ENCODE measurements at regions of chr17 and their contacts with region 1.

Region 1: DNA sequence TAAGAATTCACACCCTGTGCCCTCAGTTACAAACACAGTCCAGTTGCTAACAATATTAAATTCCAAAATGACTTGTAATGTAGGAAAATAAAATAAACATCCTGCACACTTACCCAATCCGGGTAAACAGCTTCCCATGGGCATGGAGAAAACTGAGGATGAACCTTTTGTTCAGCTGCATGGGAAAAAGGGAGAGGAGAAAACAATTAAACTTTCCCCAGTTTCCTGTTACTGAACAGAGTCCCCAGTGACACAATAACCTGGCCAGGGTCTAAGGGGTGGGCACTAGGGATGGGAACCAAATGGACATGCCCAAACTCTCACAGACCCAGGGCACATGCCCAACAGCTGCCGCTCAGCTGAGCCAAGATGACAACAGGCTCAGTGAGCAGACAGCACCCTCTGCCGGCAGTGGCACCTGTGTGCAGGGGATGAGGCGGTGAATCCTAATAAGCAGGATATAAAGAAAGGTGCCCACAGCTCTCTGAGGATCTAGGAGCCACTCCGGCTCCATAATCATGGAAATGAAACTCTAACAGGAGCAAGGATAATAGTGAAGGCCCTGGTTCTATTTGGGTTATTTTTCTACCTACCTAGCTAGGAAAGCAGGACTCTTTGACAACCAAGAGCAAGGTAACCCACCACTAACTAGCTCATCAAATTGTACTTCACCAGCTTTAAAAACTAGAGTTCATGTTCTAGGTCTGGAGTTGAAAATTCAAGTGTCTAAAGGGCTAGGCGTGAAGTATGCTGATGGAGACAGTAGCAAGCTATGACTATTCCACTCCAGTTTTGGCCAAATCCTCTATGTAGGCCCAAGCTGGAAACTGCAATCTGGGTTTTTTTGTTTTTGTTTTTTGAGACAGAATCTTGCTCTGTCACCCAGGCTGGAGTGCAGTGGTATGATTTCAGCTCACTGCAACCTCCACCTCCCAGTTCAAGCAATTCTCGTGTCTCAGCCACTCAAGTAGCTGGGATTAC is 58.8 kb downstream of the SMG6 start:
- DNase-seq: peak; percentile 87
- H3K4me3 ChIP-seq: no peak overlapping the region; a peak in 1 of 4 replicates
- H3K27ac ChIP-seq: peak overlapping the region; percentile 18 to 67; a peak in 3 of 4 replicates
- H3K4me1 ChIP-seq: peaks cover 7 to 15% of the 10 kb centered on the region in 2 experiments; a peak in 1 of 4 replicates
- H3K27me3 ChIP-seq: no peaks in the 10 kb centered on the region
- CTCF ChIP-seq: peak; percentile 96
- EP300 ChIP-seq: no peak
- RAD21 ChIP-seq: peak; percentile 98

Region 2: DNA sequence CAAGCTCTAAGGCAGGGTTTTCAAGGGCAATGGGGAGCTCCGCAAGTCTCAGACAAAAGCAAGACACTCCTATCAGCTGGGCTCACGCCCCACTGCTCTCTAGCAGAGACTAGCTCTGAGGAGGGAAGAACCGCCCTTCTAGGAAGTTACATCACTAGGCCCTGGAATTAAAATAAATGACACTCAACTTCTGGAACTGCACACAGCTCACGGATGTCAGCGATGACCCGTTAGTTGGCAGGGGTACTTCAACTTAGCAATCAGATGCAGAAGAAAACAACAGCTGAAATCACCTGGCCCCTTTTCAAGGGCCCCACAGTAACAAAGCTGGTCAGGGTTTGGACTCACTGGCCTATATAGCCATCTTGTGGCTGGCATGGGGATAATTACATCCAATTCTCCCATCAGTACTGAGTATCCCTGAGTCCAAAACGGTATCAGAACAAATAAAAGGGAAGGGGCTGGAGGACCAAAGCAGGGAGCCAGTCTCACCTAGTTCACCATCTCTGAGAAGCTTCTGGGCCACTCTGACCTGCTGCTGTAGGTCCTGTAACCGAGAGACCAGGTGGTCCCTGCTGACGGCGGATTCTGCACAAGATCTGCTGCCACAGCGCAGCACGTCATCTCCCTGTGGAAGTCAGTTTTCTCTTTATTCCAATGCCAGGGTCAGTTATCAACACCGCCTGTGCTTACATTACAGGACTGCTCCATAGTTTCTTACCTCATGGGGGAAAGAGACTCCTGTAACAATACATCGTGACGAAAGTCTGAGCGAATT is 460.8 kb before region 1 on chr17:
- CTCF ChIA-PET with region 1: no interaction called
- POLR2A ChIA-PET with region 1: no interaction called
- DNase-seq: peak; percentile 78
- H3K4me3 ChIP-seq: no peak overlapping the region; a peak in 1 of 4 replicates
- H3K27ac ChIP-seq: peak overlapping the region in 1 of 2 experiments; percentile 18; a peak in 2 of 4 replicates
- H3K4me1 ChIP-seq: peaks cover 14 to 26% of the 10 kb centered on the region in 2 experiments; a peak in 3 of 4 replicates
- H3K27me3 ChIP-seq: no peaks in the 10 kb centered on the region
- CTCF ChIP-seq: peak; percentile 77
- EP300 ChIP-seq: no peak
- RAD21 ChIP-seq: peak; percentile 85

Region 3: GRCh38 chr17:2029911-2030778 is 214.7 kb before region 1 on chr17 and contains the start of gene DPH1:
- CTCF ChIA-PET with region 1: interaction called, 18 read pairs
- POLR2A ChIA-PET with region 1: no interaction called
- DNase-seq: peak; percentile 96
- H3K4me3 ChIP-seq: peak within 1 kb of the TSS; percentile 99 to 100
- H3K27ac ChIP-seq: peak within 1 kb of the TSS; percentile 56 to 64; a peak in 3 of 4 replicates
- H3K4me1 ChIP-seq: peaks cover 5 to 14% of the 10 kb centered on the region in 2 experiments; a peak in 2 of 4 replicates
- H3K27me3 ChIP-seq: peaks cover 7% of the 10 kb centered on the region; the same call in 1 of the 2 replicates
- CTCF ChIP-seq: no peak
- EP300 ChIP-seq: no peak
- RAD21 ChIP-seq: no peak; the same call in 1 of the 2 replicates
- polyA plus RNA-seq, gene DPH1: 36.2 and 39.5 TPM in 2 replicates

Region 4: DNA sequence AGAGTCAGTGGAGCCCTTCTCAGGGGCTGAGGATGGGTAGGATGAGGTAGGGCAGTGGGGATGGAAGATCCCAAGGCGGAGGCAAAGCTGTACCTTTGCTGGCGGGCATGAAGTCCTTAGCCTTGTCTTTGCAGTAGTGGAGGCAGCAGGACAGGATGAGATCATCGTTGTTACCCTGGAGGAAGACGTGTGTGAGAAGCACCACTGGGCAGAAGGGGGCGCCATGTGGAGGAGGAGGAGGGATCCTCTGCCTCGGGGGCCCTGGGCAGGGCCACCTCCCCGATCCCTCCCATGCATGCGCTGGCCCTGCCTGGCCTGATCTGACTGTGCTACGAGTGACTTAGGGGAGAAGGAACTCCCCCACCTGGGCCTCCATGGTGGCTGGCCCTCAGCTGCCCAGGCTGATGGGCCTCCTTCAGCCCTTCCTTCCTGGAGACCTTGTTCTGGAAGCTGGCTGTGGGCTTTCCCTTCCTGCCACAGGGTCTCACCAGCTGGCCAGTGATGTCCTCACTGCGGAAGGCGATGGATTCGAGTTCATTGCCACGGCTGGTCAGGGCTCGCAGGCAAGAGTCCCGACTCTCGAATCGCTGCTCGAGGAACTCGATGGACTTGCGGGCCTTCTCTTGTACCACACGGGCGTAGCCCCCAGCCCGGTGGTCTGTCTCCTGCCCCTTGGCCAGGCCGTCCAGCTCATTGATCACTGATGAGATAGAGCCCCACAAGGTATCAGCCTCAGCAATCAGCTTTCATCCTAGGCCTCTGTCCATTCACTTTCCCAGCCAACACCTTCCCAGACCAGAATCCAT is 179.7 kb before region 1 on chr17:
- CTCF ChIA-PET with region 1: interaction called, 185 read pairs
- POLR2A ChIA-PET with region 1: no interaction called
- DNase-seq: peak; percentile 66
- H3K4me3 ChIP-seq: no peak overlapping the region
- H3K27ac ChIP-seq: peak overlapping the region in 1 of 2 experiments; percentile 69; a peak in 3 of 4 replicates
- H3K4me1 ChIP-seq: peaks cover 40 to 43% of the 10 kb centered on the region in 2 experiments; a peak in 3 of 4 replicates
- H3K27me3 ChIP-seq: no peaks in the 10 kb centered on the region
- CTCF ChIP-seq: peak; percentile 54
- EP300 ChIP-seq: no peak
- RAD21 ChIP-seq: peak; percentile 39

Region 5: DNA sequence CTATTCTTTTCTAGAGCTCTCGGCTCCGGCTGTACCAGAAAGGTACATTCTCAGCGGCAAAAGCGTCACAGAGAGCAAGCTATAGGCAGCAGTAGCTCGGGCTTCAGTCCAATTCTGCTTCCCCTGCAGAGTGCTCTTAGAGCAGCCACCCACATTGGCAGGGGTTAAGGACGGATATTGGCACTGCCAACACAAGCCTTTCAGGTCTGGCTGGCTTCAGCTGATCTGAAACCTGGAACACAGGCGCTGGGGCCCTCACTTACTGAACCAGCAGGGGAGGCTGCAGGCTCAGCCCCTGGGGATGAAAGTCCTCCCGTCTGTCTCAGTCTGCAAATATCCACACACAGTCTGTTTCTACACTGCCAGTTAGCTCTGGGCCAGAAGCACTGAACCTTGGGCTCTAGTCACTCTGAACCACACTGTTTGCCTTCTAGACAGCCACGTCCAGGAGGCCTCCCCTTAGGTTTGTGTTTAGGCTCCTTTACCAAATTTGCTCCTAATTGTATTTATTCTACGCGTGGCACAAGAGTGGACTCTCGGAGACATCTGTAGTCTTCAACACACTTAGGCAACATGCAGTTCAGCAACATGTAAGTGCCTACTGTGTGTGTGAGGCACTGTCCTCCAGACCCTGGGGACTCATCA is 149.8 kb before region 1 on chr17:
- CTCF ChIA-PET with region 1: interaction called, 35 read pairs
- POLR2A ChIA-PET with region 1: no interaction called
- DNase-seq: peak; percentile 37
- H3K4me3 ChIP-seq: no peak overlapping the region
- H3K27ac ChIP-seq: peak overlapping the region in 1 of 2 experiments; percentile 29; a peak in 1 of 4 replicates
- H3K4me1 ChIP-seq: peaks cover 13 to 19% of the 10 kb centered on the region in 2 experiments; a peak in 3 of 4 replicates
- H3K27me3 ChIP-seq: no peaks in the 10 kb centered on the region
- CTCF ChIP-seq: peak; percentile 55
- EP300 ChIP-seq: no peak
- RAD21 ChIP-seq: peak; percentile 72

Region 6: GRCh38 chr17:2157081-2157480 is 87.8 kb before region 1 on chr17:
- CTCF ChIA-PET with region 1: interaction called, 11 read pairs
- POLR2A ChIA-PET with region 1: no interaction called
- DNase-seq: no peak
- H3K4me3 ChIP-seq: no peak overlapping the region
- H3K27ac ChIP-seq: peak overlapping the region; percentile 33 to 47; a peak in 3 of 4 replicates
- H3K4me1 ChIP-seq: peaks cover 0 to 3% of the 10 kb centered on the region in 2 experiments; a peak in 1 of 4 replicates
- H3K27me3 ChIP-seq: no peaks in the 10 kb centered on the region
- CTCF ChIP-seq: no peak
- EP300 ChIP-seq: no peak
- RAD21 ChIP-seq: no peak

Region 7: GRCh38 chr17:2259769-2260536 is 15.1 kb after region 1 on chr17:
- CTCF ChIA-PET with region 1: interaction called, 38 read pairs
- POLR2A ChIA-PET with region 1: no interaction called
- DNase-seq: no peak
- H3K4me3 ChIP-seq: no peak overlapping the region
- H3K27ac ChIP-seq: no peak overlapping the region; a peak in 1 of 4 replicates
- H3K4me1 ChIP-seq: peaks cover 2 to 23% of the 10 kb centered on the region in 2 experiments; a peak in 3 of 4 replicates
- H3K27me3 ChIP-seq: no peaks in the 10 kb centered on the region
- CTCF ChIP-seq: no peak
- EP300 ChIP-seq: no peak
- RAD21 ChIP-seq: no peak

Region 8: GRCh38 chr17:2366747-2367494 is 122.1 kb after region 1 on chr17:
- CTCF ChIA-PET with region 1: no interaction called
- POLR2A ChIA-PET with region 1: no interaction called
- DNase-seq: no peak
- H3K4me3 ChIP-seq: no peak overlapping the region
- H3K27ac ChIP-seq: no peak overlapping the region
- H3K4me1 ChIP-seq: no peaks in the 10 kb centered on the region; a peak in 1 of 4 replicates
- H3K27me3 ChIP-seq: no peaks in the 10 kb centered on the region
- CTCF ChIP-seq: no peak
- EP300 ChIP-seq: no peak
- RAD21 ChIP-seq: no peak

Measured in SK-N-SH (cell line).